Breast epithelium (tissue), 4 donors: ENCODE measurements at regions of chr2 and their contacts with region 1.

Region 1: DNA sequence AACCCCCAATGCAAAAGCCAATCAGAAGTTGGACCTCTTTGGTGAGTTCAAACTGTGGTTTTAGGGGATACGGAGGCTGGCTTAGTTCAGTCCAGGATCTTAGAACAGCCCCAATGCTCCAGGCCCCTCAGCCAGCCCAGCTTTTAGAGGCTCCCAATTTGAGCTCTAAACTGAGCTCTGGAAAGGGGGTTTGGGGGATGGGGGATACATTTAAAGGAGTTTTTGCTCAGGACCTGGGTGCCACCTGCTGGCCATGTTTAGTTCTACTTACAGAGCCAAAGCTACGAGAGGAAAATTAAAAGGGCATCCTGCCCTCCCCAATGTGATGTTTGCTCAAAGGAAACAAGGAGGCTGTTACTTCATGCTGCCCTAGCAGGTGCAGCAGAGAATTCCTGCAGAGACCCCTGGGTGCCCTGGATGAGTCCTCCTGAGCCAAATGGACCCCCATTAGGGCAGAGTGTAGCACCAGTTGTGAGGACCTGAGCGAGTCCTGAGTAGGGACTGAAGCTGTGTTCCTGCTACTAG is 15.9 kb upstream of the TMEM214 start:
- DNase-seq: no peak
- H3K4me3 ChIP-seq: no peak overlapping the region
- H3K27ac ChIP-seq: peak overlapping the region in 1 of 2 donors; percentile 43
- H3K4me1 ChIP-seq: peaks cover 0 to 14% of the 10 kb centered on the region in 2 donors
- H3K27me3 ChIP-seq: no peaks in the 10 kb centered on the region
- CTCF ChIP-seq: peak; percentile 42 to 78 (median 69)
- POLR2A ChIP-seq: no peak

Region 2: DNA sequence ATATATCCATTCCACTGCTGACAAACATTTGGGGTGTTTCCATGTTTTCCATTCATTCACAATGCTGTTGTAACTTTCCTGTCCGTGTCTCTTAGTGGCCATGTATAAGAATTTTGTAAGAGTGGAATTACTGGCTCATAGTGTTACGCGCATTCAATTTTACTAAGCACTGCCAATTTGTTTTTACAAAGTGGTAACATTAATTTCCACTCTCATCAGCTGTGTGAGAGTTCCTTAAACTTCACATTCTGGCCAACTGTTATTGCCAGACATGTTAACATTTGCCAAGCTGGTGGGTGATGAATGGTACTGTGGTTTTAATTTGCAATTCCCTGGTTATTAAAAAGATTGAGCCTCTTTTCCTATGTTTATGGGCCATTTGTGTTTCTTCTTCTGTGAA is 1477.7 kb before region 1 on chr2:
- intact Hi-C with region 1: no loop called
- DNase-seq: no peak
- H3K4me3 ChIP-seq: no peak overlapping the region
- H3K27ac ChIP-seq: no peak overlapping the region
- H3K4me1 ChIP-seq: no peaks in the 10 kb centered on the region
- H3K27me3 ChIP-seq: no peaks in the 10 kb centered on the region
- CTCF ChIP-seq: no peak
- POLR2A ChIP-seq: no peak

Region 3: DNA sequence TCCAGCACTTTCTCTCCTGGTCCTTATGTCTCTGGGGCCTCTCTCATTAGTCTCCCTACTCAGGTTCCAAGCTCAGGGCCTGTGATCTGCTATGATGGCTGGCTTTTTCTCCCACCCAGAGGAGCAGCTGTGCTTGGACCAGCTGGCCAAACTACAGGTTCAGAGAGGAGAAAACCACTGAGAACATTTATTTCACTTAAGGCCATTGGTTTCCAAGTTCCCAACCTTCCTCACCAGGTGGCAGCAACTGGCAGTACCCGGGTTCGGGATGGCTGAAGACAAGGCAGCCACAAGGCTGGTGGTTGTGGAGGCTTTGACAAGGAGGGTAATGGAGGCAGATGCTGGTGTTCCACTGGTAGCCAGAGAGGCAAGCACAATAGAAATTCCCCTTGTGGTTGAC is 700.8 kb before region 1 on chr2:
- intact Hi-C with region 1: loop called (anchors 5 kb)
- DNase-seq: no peak
- H3K4me3 ChIP-seq: no peak overlapping the region
- H3K27ac ChIP-seq: no peak overlapping the region
- H3K4me1 ChIP-seq: no peaks in the 10 kb centered on the region
- H3K27me3 ChIP-seq: no peaks in the 10 kb centered on the region
- CTCF ChIP-seq: no peak
- POLR2A ChIP-seq: no peak

Region 4: GRCh38 chr2:26968001-26968400 is 48.9 kb before region 1 on chr2:
- intact Hi-C with region 1: loop called (anchors 10 kb)
- DNase-seq: no peak
- H3K4me3 ChIP-seq: no peak overlapping the region
- H3K27ac ChIP-seq: no peak overlapping the region
- H3K4me1 ChIP-seq: peaks cover 0 to 4% of the 10 kb centered on the region in 2 donors
- H3K27me3 ChIP-seq: no peaks in the 10 kb centered on the region
- CTCF ChIP-seq: no peak
- POLR2A ChIP-seq: no peak